ENCODE measurements at regions of chr10 and their contacts with region 1.

Region 1: DNA sequence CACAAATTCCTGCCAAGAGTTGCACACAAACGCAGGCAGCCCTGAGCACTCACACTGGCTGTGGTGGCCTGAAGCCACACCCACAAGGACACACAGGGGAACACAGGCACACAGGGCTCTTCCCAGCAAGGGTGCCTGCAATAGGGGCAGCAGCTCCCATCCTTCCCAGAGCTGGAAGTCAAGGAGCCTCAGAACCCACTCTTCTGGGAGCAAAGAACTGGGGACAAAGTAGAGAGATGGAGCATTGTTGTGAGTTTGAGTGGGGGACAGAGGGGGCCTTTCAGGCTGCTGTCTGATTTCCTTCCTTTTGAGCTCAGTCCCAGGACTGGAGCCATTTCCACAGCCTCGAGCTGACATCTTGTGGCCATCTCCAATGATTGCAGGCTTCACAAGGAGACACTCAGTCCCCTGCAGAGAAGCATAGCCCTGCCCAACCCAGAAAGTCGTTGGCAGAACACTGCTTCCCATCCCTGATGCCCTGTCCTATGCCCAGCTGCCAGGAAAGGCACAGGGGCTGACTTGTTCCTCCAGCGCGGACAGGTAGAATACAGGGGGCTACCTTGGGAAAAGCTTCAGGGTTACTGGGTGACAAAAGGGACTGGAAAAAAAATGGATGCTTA is 34.4 kb upstream of the SLF2 start:
- DNase-seq: peak; percentile 80
- ATAC-seq: peak; percentile 78
- H3K4me3 ChIP-seq: peak overlapping the region in 1 of 3 experiments; percentile 29; a peak in 2 of 6 replicates
- H3K27ac ChIP-seq: no peak overlapping the region
- H3K4me1 ChIP-seq: peaks cover 100% of the 10 kb centered on the region
- H3K27me3 ChIP-seq: no peaks in the 10 kb centered on the region
- CTCF ChIP-seq: peak; percentile 96
- EP300 ChIP-seq: no peak
- POLR2A ChIP-seq: no peak
- RAD21 ChIP-seq: peak; percentile 92

Region 2: DNA sequence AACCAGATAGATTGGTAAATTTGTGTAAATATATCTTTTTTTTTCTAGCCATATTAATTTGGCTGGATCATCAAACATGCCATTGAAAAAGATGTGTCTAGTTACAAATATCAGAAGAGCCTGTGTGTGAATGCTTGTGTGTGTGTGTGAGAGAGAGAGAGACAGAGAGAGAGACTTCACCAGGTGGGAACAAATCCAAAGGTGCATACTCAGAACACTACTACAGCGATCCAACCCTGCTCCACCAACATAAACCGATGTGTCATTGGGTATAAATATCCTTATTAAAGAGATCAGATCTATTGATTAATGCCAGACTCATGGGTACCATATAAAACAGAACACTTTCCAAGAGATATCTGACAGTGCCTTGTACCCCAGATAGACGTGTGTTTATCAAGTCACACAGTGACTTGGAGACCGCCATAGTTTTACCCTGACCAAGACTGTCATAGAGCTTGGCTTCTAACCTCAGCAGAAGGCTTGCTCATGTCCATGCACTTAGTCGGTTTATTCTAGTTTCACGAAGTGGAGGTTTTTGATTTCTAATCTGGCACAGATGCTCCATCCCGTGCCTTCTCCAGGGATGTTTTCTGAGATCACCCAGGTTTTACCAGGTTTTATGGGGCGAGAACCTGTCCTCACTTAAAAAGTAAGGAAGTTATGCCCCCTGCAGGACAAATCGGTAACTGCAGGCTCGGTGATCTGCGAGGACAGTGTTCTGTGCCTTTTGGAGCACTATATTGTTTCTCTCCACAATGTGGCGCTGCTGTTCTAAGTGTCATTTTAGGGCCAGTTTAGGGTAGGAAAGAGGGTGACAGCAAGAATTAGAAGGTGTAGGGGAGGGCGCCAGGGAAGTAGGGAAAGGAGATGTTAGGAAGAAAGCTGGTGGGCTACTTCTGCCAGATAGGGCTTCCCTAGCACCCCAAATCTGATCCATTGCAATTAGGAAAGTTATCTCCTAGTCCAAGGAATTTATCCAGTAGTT is 444.9 kb before region 1 on chr10:
- CTCF ChIA-PET with region 1: interaction called, 12 read pairs
- POLR2A ChIA-PET with region 1: no interaction called
- in situ Hi-C with region 1: no loop called
- intact Hi-C with region 1: no loop called
- DNase-seq: peak; percentile 89
- ATAC-seq: peak; percentile 93
- H3K4me3 ChIP-seq: no peak overlapping the region
- H3K27ac ChIP-seq: no peak overlapping the region
- H3K4me1 ChIP-seq: peaks cover 13% of the 10 kb centered on the region; the same call in 1 of the 2 replicates
- H3K27me3 ChIP-seq: no peaks in the 10 kb centered on the region
- CTCF ChIP-seq: peak; percentile 99
- EP300 ChIP-seq: no peak
- POLR2A ChIP-seq: no peak
- RAD21 ChIP-seq: peak; percentile 98

Region 3: GRCh38 chr10:100562008-100562711 is 316.2 kb before region 1 on chr10:
- CTCF ChIA-PET with region 1: interaction called, 16 read pairs
- POLR2A ChIA-PET with region 1: no interaction called
- in situ Hi-C with region 1: loop called (anchors 5 kb)
- intact Hi-C with region 1: loop called (anchors 1 kb)
- DNase-seq: peak; percentile 32
- ATAC-seq: peak; percentile 74
- H3K4me3 ChIP-seq: no peak overlapping the region
- H3K27ac ChIP-seq: no peak overlapping the region
- H3K4me1 ChIP-seq: peaks cover 10% of the 10 kb centered on the region
- H3K27me3 ChIP-seq: peaks cover 2% of the 10 kb centered on the region in 2 experiments; a peak in 2 of 5 replicates
- CTCF ChIP-seq: peak; percentile 98
- EP300 ChIP-seq: no peak
- POLR2A ChIP-seq: no peak
- RAD21 ChIP-seq: peak; percentile 94

Region 4: GRCh38 chr10:100670828-100671479 is 207.4 kb before region 1 on chr10:
- CTCF ChIA-PET with region 1: interaction called, 18 read pairs
- POLR2A ChIA-PET with region 1: no interaction called
- in situ Hi-C with region 1: loop called (anchors 5 kb)
- intact Hi-C with region 1: loop called (anchors 2 kb)
- DNase-seq: no peak
- ATAC-seq: peak; percentile 87
- H3K4me3 ChIP-seq: peak overlapping the region in 2 of 3 experiments; percentile 16 to 35; a peak in 3 of 6 replicates
- H3K27ac ChIP-seq: no peak overlapping the region
- H3K4me1 ChIP-seq: no peaks in the 10 kb centered on the region
- H3K27me3 ChIP-seq: peaks cover 8 to 30% of the 10 kb centered on the region in 2 experiments
- CTCF ChIP-seq: peak; percentile 61
- EP300 ChIP-seq: no peak
- POLR2A ChIP-seq: no peak
- RAD21 ChIP-seq: peak; percentile 87

Region 5: DNA sequence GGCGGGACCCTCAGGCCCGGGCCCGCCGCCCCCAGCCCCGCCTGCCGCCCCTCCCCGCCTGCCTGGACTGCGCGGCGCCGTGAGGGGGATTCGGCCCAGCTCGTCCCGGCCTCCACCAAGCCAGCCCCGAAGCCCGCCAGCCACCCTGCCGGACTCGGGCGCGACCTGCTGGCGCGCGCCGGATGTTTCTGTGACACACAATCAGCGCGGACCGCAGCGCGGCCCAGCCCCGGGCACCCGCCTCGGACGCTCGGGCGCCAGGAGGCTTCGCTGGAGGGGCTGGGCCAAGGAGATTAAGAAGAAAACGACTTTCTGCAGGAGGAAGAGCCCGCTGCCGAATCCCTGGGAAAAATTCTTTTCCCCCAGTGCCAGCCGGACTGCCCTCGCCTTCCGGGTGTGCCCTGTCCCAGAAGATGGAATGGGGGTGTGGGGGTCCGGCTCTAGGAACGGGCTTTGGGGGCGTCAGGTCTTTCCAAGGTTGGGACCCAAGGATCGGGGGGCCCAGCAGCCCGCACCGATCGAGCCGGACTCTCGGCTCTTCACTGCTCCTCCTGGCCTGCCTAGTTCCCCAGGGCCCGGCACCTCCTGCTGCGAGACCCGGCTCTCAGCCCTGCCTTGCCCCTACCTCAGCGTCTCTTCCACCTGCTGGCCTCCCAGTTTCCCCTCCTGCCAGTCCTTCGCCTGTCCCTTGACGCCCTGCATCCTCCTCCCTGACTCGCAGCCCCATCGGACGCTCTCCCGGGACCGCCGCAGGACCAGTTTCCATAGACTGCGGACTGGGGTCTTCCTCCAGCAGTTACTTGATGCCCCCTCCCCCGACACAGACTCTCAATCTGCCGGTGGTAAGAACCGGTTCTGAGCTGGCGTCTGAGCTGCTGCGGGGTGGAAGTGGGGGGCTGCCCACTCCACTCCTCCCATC is 50.3 kb before region 1 on chr10:
- CTCF ChIA-PET with region 1: no interaction called
- POLR2A ChIA-PET with region 1: no interaction called
- in situ Hi-C with region 1: no loop called
- intact Hi-C with region 1: loop called (anchors 5 kb)
- DNase-seq: no peak
- ATAC-seq: peak; percentile 85
- H3K4me3 ChIP-seq: peak overlapping the region; percentile 33 to 79 (median 57); a peak in 5 of 6 replicates
- H3K27ac ChIP-seq: no peak overlapping the region
- H3K4me1 ChIP-seq: peaks cover 33% of the 10 kb centered on the region
- H3K27me3 ChIP-seq: peaks cover 18 to 72% of the 10 kb centered on the region in 2 experiments
- CTCF ChIP-seq: peak; percentile 55
- EP300 ChIP-seq: no peak
- POLR2A ChIP-seq: no peak
- RAD21 ChIP-seq: no peak

Region 6: GRCh38 chr10:100838986-100839385 is 39.4 kb before region 1 on chr10:
- CTCF ChIA-PET with region 1: no interaction called
- POLR2A ChIA-PET with region 1: no interaction called
- in situ Hi-C with region 1: no loop called
- intact Hi-C with region 1: no loop called
- DNase-seq: no peak
- ATAC-seq: no peak
- H3K4me3 ChIP-seq: no peak overlapping the region
- H3K27ac ChIP-seq: no peak overlapping the region
- H3K4me1 ChIP-seq: peaks cover 9% of the 10 kb centered on the region
- H3K27me3 ChIP-seq: peaks cover 0 to 2% of the 10 kb centered on the region in 2 experiments; a peak in 1 of 5 replicates
- CTCF ChIP-seq: no peak
- EP300 ChIP-seq: no peak
- POLR2A ChIP-seq: no peak
- RAD21 ChIP-seq: no peak

Region 7: GRCh38 chr10:100864978-100865377 is 13.4 kb before region 1 on chr10:
- CTCF ChIA-PET with region 1: no interaction called
- POLR2A ChIA-PET with region 1: no interaction called
- in situ Hi-C with region 1: no loop called
- intact Hi-C with region 1: no loop called
- DNase-seq: no peak
- ATAC-seq: peak; percentile 15; the same call in 2 of the 3 replicates
- H3K4me3 ChIP-seq: no peak overlapping the region
- H3K27ac ChIP-seq: no peak overlapping the region
- H3K4me1 ChIP-seq: peaks cover 24% of the 10 kb centered on the region
- H3K27me3 ChIP-seq: peaks cover 6 to 69% of the 10 kb centered on the region in 2 experiments; a peak in 3 of 5 replicates
- CTCF ChIP-seq: no peak
- EP300 ChIP-seq: no peak
- POLR2A ChIP-seq: no peak
- RAD21 ChIP-seq: no peak

Region 8: GRCh38 chr10:100923580-100923979 is 45.2 kb after region 1 on chr10:
- CTCF ChIA-PET with region 1: no interaction called
- POLR2A ChIA-PET with region 1: no interaction called
- in situ Hi-C with region 1: no loop called
- intact Hi-C with region 1: no loop called
- DNase-seq: no peak
- ATAC-seq: no peak
- H3K4me3 ChIP-seq: no peak overlapping the region
- H3K27ac ChIP-seq: no peak overlapping the region
- H3K4me1 ChIP-seq: no peaks in the 10 kb centered on the region
- H3K27me3 ChIP-seq: no peaks in the 10 kb centered on the region
- CTCF ChIP-seq: no peak
- EP300 ChIP-seq: no peak
- POLR2A ChIP-seq: no peak
- RAD21 ChIP-seq: no peak

Region 9: GRCh38 chr10:100934084-100934659 is 55.8 kb after region 1 on chr10:
- CTCF ChIA-PET with region 1: interaction called, 10 read pairs
- POLR2A ChIA-PET with region 1: interaction called, 4 read pairs
- in situ Hi-C with region 1: no loop called
- intact Hi-C with region 1: loop called (anchors 1 kb)
- DNase-seq: peak; percentile 45
- ATAC-seq: peak; percentile 60
- H3K4me3 ChIP-seq: no peak overlapping the region
- H3K27ac ChIP-seq: no peak overlapping the region
- H3K4me1 ChIP-seq: peaks cover 8% of the 10 kb centered on the region
- H3K27me3 ChIP-seq: no peaks in the 10 kb centered on the region
- CTCF ChIP-seq: peak; percentile 58
- EP300 ChIP-seq: no peak
- POLR2A ChIP-seq: no peak
- RAD21 ChIP-seq: 0 out of 2 replicates have a peak, but pooled peaks have one; percentile 17

Region 10: GRCh38 chr10:100970076-100970913 is 91.9 kb after region 1 on chr10:
- CTCF ChIA-PET with region 1: no interaction called
- POLR2A ChIA-PET with region 1: no interaction called
- in situ Hi-C with region 1: no loop called
- intact Hi-C with region 1: no loop called
- DNase-seq: peak; percentile 84
- ATAC-seq: peak; percentile 34
- H3K4me3 ChIP-seq: peak overlapping the region; percentile 84 to 96 (median 94)
- H3K27ac ChIP-seq: peak overlapping the region; percentile 96
- H3K4me1 ChIP-seq: peaks cover 88% of the 10 kb centered on the region
- H3K27me3 ChIP-seq: no peaks in the 10 kb centered on the region; a peak in 1 of 5 replicates
- CTCF ChIP-seq: peak; percentile 18; the same call in 1 of the 2 replicates
- EP300 ChIP-seq: peak in 1 of 2 experiments; percentile 51; a peak in 1 of 4 replicates
- POLR2A ChIP-seq: peak in 1 of 2 experiments; percentile 82; a peak in 2 of 4 replicates
- RAD21 ChIP-seq: no peak